MCF 10A (cell line): ENCODE measurements at regions of chr1 and their contacts with region 1.

Region 1: GRCh38 chr1:27662707-27663393 is 9.1 kb downstream of the IFI6 start:
- DNase-seq: peak; percentile 86
- H3K4me3 Mint-ChIP-seq: no peak overlapping the region
- H3K27ac Mint-ChIP-seq: peak overlapping the region; percentile 81
- H3K4me1 Mint-ChIP-seq: peaks cover 29% of the 10 kb centered on the region
- H3K27me3 Mint-ChIP-seq: no peaks in the 10 kb centered on the region
- CTCF ChIP-seq: peak; percentile 69

Region 2: GRCh38 chr1:27609210-27609555 is 53.7 kb before region 1 on chr1:
- CTCF ChIA-PET with region 1: interaction called, 160 read pairs
- POLR2A ChIA-PET with region 1: interaction called, 19 read pairs
- intact Hi-C with region 1: loop called (anchors 1 kb)
- DNase-seq: no peak
- H3K4me3 Mint-ChIP-seq: no peak overlapping the region
- H3K27ac Mint-ChIP-seq: no peak overlapping the region
- H3K4me1 Mint-ChIP-seq: peaks cover 5% of the 10 kb centered on the region
- H3K27me3 Mint-ChIP-seq: no peaks in the 10 kb centered on the region
- CTCF ChIP-seq: no peak

Region 3: DNA sequence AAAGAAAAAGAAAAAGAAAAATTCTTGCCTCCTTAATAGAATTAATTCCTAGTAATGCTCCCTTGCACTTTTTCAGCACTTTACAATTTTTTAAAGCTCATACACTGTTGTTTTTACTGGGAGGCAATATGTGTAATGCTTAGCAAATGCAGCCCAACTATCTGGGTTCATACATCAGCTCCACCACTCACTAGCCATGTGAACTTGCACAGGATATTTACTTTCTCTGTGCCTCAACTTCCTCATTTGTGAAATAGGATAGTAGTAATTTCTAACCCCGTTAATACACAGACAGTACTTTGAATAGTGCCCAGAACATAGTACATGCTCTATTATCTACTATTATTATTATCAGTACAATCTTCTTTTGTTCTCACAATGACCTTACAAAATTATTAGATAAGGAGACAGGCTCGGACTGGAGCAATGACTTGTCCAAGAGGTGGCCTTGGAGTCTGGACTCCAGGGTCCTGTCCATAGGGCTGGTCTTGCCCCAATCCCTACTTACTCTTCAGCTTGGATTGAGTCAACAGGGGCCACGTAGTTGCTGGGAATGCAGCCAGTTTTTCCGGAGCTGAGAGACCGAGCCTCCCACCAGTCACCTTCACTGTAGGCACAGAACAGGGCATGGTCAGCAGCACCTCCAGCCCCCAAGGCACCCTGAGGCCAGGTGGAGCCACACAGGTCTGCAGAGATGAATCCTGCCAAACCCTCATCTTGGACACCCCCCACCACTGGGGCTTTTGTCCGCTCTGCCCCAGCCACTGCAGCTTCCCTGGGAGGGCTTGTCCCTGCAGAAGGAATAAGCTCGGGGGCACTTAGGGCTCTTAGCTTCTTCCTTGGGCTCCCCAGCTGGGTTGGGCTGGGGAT is 41.6 kb before region 1 on chr1:
- CTCF ChIA-PET with region 1: interaction called, 10 read pairs
- POLR2A ChIA-PET with region 1: no interaction called
- intact Hi-C with region 1: no loop called
- DNase-seq: peak; percentile 85
- H3K4me3 Mint-ChIP-seq: no peak overlapping the region
- H3K27ac Mint-ChIP-seq: no peak overlapping the region
- H3K4me1 Mint-ChIP-seq: peaks cover 3% of the 10 kb centered on the region
- H3K27me3 Mint-ChIP-seq: no peaks in the 10 kb centered on the region
- CTCF ChIP-seq: no peak

Region 4: DNA sequence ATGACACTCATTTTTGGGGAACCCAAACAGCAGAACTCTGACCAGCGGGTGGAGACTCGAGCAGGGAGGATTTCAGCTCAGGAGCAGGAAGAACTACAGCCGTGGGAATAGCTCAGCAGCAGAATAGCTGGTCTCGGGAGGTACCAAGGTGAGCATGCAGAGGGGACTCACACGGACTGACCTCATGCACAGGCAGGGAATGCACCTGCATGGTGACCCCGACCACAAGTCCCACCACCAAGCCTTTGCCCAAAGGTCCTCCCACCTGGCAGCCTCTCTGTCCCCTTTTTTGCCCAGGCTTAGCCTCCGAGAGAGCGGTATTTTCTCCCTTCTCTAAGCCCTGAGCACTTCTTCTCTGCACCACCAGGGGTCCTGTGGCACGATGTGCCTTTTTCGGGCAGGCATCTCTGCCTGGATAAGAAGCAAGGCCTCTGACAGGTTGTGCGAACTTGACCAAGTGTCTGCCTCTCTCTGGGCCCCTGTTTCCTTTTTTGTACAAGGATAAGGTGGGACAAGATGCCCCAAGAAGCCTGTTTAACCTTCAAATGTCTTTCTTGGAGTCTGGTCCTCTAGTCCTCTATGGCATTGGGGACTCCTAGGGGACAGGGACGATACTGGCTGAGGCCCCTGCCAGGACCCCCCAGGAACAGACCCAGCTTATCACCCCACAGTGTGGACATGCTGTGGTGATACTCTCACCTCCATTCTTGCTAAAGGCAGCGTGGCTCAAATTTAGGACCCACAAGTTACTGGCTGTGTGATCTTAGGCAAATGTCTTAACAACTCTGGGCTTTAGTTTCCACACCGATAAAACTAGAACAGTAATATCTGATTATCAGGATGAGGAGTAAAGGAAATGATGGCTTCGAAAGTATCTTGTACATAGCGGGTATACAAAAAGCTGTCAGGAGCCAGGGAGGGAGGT is 18.9 kb before region 1 on chr1:
- CTCF ChIA-PET with region 1: interaction called, 20 read pairs
- POLR2A ChIA-PET with region 1: interaction called, 13 read pairs
- intact Hi-C with region 1: loop called (anchors 1 kb)
- DNase-seq: peak; percentile 70
- H3K4me3 Mint-ChIP-seq: no peak overlapping the region
- H3K27ac Mint-ChIP-seq: no peak overlapping the region
- H3K4me1 Mint-ChIP-seq: peaks cover 7% of the 10 kb centered on the region
- H3K27me3 Mint-ChIP-seq: no peaks in the 10 kb centered on the region
- CTCF ChIP-seq: peak; percentile 62

Region 5: DNA sequence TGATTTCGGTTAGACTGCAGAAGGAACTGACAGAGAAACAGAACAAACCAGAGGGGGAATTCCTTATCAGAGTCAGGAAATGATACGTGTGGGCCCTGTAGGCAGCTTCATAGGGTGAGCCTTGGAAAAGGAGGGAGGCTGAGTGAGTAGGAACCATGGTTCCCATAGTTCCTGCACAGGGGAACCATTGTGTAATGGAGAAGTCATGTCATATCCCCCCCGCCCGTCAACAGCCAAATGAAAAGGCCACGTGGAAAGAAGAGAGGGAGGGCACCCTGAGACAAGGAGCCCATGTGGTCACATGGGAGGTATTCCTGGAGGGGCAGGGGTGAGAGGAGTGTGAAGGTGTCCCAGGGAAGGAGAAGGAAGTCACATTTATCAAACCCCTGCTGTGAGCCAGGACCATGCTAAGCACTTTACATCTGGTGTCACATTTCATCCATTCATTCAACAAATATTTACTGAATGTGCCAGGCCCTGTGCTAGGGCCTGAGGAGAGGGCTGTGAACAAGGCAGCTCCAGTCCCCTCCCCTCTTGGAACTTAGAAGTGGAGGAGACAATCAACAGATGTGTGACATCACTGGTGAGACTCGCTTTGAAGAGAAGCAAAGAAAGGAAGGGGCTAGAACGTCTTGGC is 12.2 kb before region 1 on chr1:
- CTCF ChIA-PET with region 1: interaction called, 7 read pairs
- POLR2A ChIA-PET with region 1: interaction called, 13 read pairs
- intact Hi-C with region 1: no loop called
- DNase-seq: peak; percentile 57
- H3K4me3 Mint-ChIP-seq: no peak overlapping the region
- H3K27ac Mint-ChIP-seq: peak overlapping the region; percentile 14
- H3K4me1 Mint-ChIP-seq: peaks cover 30% of the 10 kb centered on the region
- H3K27me3 Mint-ChIP-seq: no peaks in the 10 kb centered on the region
- CTCF ChIP-seq: no peak